Activated CD4-positive, alpha-beta T cell treated with anti-CD3 and anti-CD28 coated beads for 36 hours (primary cell): ENCODE measurements at regions of chr19 and their contacts with region 1.

Region 1: DNA sequence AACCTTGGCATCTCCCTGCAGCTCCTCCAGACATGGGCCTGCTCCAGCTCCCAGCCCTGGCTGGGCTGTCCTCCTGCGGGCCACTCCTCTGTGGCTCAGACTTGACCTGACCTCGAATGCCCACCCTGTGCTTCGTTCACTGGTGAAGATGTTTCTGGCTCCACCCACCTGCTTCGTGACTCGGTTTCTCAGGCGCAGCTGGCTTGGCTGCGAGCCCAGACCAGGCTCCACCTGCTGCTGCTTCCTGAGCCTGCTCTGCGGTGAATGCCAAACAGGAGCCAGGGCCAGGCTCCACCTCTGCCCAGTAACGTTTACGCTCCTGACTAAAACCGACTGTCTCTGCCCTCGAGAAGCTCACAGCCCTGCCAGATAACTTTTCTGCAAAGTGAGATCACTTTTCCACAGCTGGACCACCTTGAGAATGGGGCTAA is 8.9 kb upstream of the RSPH6A start:
- DNase-seq: no peak
- ATAC-seq: no peak
- H3K4me3 Mint-ChIP-seq: no peak overlapping the region
- H3K27ac Mint-ChIP-seq: no peak overlapping the region
- H3K4me1 Mint-ChIP-seq: no peaks in the 10 kb centered on the region
- H3K27me3 Mint-ChIP-seq: no peaks in the 10 kb centered on the region

Region 2: DNA sequence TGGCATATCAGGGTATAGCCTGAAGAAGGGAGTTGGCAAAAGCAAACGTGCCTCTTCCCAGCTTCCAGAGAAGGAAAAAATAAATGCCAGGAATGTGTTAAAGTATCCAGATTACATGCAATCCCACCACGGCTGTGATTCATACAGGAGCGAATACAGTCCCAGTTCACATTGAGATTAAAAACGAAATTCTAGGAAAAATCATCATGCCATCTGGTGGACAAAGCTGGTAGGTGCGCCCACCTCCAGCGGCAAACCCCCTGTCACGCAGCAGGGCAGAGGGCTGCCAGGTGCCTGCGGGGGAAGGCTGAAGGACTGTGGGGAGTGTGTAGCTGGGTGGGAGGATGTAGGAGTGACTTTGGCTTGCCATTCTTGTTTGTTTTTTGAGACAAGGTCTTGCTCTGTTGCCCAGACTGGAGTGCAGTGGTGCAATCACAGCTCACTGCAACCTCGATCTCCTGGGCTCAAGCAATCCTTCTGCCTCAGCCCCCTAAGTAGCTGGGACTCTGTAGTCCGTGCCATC is 25.0 kb before region 1 on chr19:
- CTCF ChIA-PET with region 1: interaction called, 12 read pairs
- POLR2A ChIA-PET with region 1: no interaction called
- intact Hi-C with region 1: no loop called
- DNase-seq: peak; percentile 76
- ATAC-seq: peak; percentile 92
- H3K4me3 Mint-ChIP-seq: no peak overlapping the region
- H3K27ac Mint-ChIP-seq: no peak overlapping the region
- H3K4me1 Mint-ChIP-seq: peaks cover 5% of the 10 kb centered on the region
- H3K27me3 Mint-ChIP-seq: peaks cover 26% of the 10 kb centered on the region